ENCODE measurements at regions of chr6 and their contacts with region 1.

Region 1: GRCh38 chr6:29909985-29910384 is 32.3 kb upstream of the HLA-A start:
- DNase-seq: no peak
- ATAC-seq: no peak
- H3K4me3 ChIP-seq: no peak overlapping the region
- H3K27ac ChIP-seq: no peak overlapping the region
- H3K4me1 ChIP-seq: no peaks in the 10 kb centered on the region
- H3K27me3 ChIP-seq: no peaks in the 10 kb centered on the region
- CTCF ChIP-seq: no peak
- POLR2A ChIP-seq: no peak

Region 2: DNA sequence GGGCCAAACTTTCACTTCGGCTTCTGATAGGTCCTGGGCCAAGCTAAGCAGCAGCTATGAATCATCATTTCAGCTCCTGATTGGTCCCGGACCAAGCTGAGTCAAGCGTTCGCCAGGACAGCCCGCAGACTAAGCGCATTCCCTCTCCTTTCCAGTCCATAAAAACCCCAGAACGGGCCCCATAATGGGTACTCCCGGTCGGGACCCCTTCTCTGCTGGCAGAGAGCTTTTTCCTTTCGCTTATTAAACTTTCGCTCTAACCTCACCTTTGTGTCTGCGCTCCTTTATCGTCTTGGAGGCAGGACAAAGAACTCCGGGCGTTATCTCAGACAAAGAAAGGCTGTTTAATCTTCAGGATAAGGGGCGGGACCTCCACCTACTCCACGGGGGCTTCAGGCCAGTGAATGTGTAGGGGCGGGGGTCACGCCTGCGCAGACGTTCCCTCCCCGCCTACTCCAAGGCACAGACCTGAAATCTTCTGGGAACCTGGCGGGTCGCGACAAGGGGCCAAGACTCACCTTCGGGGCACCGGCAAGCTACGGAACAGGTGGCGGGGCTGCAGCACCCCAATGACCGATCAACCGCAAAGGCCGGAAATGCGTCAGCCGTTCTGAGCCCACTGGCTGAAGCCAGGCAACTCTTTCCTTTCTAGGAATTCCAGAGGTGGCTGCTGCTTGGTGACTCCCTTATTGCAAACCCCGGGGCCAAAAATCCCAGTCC is 1574.3 kb before region 1 on chr6 and contains the start of gene ZSCAN31:
- in situ Hi-C with region 1: no loop called
- intact Hi-C with region 1: no loop called
- DNase-seq: peak; percentile 90 to 94
- ATAC-seq: peak; percentile 98 to 99
- H3K4me3 ChIP-seq: peak within 1 kb of the TSS; percentile 78 to 91 (median 84)
- H3K27ac ChIP-seq: peak within 1 kb of the TSS; percentile 90 to 99 (median 97)
- H3K4me1 ChIP-seq: peaks cover 11 to 13% of the 10 kb centered on the region in 2 donors
- H3K27me3 ChIP-seq: no peaks in the 10 kb centered on the region
- CTCF ChIP-seq: no peak
- POLR2A ChIP-seq: peak; percentile 64 to 78
- total RNA-seq, gene ZSCAN31: 2.4 to 14.1 (median 7.5) TPM

Region 3: GRCh38 chr6:29602564-29603361 is 307.2 kb before region 1 on chr6:
- in situ Hi-C with region 1: no loop called
- intact Hi-C with region 1: no loop called
- DNase-seq: no peak
- ATAC-seq: no peak
- H3K4me3 ChIP-seq: no peak overlapping the region
- H3K27ac ChIP-seq: no peak overlapping the region
- H3K4me1 ChIP-seq: no peaks in the 10 kb centered on the region
- H3K27me3 ChIP-seq: no peaks in the 10 kb centered on the region
- CTCF ChIP-seq: no peak
- POLR2A ChIP-seq: no peak

Region 4: DNA sequence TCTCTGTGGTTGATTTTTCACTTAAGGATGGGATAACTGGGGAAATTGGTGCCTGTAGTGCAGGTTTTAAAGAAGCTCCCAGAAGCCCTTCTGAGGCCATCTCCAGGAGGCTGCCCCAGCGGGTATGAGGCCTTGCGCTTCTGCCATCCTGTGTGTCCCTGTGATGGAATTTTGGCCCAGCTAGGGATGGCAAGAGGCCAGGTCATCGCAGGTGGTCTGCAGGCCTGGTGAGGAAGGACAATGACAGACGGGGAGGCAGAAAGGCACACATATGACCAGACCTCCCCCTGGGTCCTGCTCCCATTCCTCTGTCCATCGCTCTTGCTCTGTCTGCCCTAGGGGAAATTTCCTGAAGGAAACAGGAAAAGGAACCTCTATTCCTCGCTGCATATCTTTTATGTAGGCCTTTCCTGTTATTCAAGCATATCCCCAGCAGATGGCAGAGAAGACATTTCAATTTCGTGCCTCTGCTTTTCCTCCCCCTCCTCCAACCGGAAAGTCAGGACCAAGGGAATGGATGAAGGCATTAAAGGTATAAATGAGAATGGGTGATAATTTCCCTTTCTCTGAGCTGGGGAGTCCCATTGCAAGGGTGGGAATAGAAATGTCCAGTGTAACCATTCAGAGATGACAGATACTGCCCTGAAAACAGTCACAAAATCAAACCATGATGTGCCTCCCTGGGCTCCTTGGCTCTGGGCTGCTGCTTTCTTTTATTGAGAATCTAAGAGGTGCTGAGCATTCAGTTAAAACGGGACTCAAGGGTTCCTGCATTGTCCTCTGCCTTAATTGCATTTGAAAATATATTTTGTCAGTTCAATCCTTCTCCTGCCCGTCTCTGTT is 204.4 kb before region 1 on chr6:
- in situ Hi-C with region 1: no loop called
- intact Hi-C with region 1: no loop called
- DNase-seq: no peak
- ATAC-seq: no peak
- H3K4me3 ChIP-seq: no peak overlapping the region
- H3K27ac ChIP-seq: no peak overlapping the region
- H3K4me1 ChIP-seq: no peaks in the 10 kb centered on the region
- H3K27me3 ChIP-seq: peaks cover 0 to 9% (median 8%) of the 10 kb centered on the region in 3 donors
- CTCF ChIP-seq: peak in 4 of 5 experiments; percentile 18 to 58 (median 40)
- POLR2A ChIP-seq: no peak

Region 5: DNA sequence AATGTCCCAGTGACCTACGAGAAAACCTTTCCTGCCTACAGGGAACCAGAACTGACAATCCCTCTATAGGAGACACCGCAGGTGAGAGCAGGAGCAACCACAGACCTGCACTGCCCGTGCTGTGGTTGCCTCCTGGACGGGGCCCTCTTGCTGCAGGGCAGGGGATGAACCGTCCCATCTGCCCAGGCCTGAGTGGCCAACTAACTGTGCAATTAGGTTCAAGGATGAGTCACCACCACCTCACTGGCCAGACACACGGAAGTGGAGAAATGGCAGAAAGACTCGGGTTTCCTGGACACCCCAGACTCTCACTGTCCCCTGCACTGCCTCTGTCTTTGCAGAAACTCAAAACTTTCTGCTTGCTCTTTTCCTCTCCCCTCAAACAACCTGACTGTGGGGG is 96.2 kb before region 1 on chr6:
- in situ Hi-C with region 1: no loop called
- intact Hi-C with region 1: loop called (anchors 10 kb)
- DNase-seq: no peak
- ATAC-seq: no peak
- H3K4me3 ChIP-seq: no peak overlapping the region
- H3K27ac ChIP-seq: no peak overlapping the region
- H3K4me1 ChIP-seq: no peaks in the 10 kb centered on the region
- H3K27me3 ChIP-seq: no peaks in the 10 kb centered on the region
- CTCF ChIP-seq: no peak
- POLR2A ChIP-seq: no peak

Measured in gastrocnemius medialis (tissue), 4 donors.